ENCODE measurements at regions of chr22 and their contacts with region 1.

Region 1: DNA sequence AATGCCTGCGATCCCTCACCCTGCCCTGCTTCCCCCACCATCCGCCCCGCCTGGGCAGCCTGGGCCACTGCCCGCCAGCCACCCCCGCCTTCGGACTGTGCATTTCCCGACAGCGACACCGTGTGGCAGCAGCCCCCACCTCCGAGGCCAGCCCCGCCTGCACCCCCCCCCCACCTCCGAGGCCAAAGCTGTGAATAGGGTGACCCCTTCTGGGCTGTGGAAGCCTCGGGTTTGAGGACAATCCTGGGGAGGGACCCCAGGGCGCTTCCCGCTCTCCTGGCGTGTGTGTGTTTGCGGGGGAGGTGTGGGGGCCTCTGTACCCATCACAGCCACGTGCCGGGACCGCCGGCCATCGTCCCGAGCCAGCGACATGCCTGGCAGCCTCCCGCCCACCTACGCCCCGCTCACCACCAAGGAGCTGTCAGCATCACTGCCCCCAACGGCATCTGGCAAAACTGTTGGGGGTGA is 33.8 kb upstream of the PPARA start:
- DNase-seq: peak; percentile 96 to 97
- H3K4me3 ChIP-seq: no peak overlapping the region
- H3K27ac ChIP-seq: peak overlapping the region; percentile 39 to 91 (median 86)
- H3K4me1 ChIP-seq: peaks cover 45 to 73% (median 54%) of the 10 kb centered on the region in 4 donors
- H3K27me3 ChIP-seq: no peaks in the 10 kb centered on the region
- CTCF ChIP-seq: peak in 5 of 7 experiments; percentile 87 to 98 (median 95)
- EP300 ChIP-seq: no peak
- POLR2A ChIP-seq: no peak

Region 2: GRCh38 chr22:45785458-45785857 is 331.1 kb before region 1 on chr22:
- intact Hi-C with region 1: no loop called
- DNase-seq: no peak
- H3K4me3 ChIP-seq: no peak overlapping the region
- H3K27ac ChIP-seq: no peak overlapping the region
- H3K4me1 ChIP-seq: peaks cover 5 to 34% (median 20%) of the 10 kb centered on the region in 4 donors
- H3K27me3 ChIP-seq: no peaks in the 10 kb centered on the region
- CTCF ChIP-seq: no peak
- EP300 ChIP-seq: no peak
- POLR2A ChIP-seq: no peak

Region 3: DNA sequence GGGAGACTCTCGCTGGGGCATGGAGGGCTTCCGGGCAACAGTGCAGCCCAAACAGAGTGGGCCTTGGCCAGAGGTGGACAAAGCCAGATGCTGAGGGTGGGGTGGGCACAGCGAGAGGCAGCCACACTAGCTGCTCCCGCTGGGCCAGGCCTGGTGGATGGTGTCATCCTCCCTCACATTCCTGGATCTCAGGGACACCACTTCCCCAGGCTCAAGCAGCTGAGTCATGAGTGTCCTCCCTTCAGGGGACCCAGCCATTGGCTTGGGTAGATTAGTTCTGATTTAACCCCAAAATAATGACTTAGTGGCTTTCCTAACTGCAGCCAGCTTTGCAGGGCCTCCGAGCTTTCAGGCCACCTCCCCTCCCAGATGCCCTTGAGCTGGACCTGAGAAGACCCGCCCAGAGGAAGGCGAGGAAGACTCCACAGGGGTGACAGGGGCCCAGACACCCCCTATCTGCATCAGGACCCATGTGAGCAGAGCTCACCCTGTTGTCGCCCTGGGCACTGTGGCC is 113.7 kb before region 1 on chr22:
- intact Hi-C with region 1: loop called (anchors 5 kb)
- DNase-seq: no peak
- H3K4me3 ChIP-seq: no peak overlapping the region
- H3K27ac ChIP-seq: peak overlapping the region in 1 of 5 donors; percentile 43
- H3K4me1 ChIP-seq: peaks cover 28 to 69% (median 49%) of the 10 kb centered on the region in 4 donors
- H3K27me3 ChIP-seq: no peaks in the 10 kb centered on the region
- CTCF ChIP-seq: no peak
- EP300 ChIP-seq: no peak
- POLR2A ChIP-seq: no peak